ENCODE measurements at regions of chr19 and their contacts with region 1.

Region 1: DNA sequence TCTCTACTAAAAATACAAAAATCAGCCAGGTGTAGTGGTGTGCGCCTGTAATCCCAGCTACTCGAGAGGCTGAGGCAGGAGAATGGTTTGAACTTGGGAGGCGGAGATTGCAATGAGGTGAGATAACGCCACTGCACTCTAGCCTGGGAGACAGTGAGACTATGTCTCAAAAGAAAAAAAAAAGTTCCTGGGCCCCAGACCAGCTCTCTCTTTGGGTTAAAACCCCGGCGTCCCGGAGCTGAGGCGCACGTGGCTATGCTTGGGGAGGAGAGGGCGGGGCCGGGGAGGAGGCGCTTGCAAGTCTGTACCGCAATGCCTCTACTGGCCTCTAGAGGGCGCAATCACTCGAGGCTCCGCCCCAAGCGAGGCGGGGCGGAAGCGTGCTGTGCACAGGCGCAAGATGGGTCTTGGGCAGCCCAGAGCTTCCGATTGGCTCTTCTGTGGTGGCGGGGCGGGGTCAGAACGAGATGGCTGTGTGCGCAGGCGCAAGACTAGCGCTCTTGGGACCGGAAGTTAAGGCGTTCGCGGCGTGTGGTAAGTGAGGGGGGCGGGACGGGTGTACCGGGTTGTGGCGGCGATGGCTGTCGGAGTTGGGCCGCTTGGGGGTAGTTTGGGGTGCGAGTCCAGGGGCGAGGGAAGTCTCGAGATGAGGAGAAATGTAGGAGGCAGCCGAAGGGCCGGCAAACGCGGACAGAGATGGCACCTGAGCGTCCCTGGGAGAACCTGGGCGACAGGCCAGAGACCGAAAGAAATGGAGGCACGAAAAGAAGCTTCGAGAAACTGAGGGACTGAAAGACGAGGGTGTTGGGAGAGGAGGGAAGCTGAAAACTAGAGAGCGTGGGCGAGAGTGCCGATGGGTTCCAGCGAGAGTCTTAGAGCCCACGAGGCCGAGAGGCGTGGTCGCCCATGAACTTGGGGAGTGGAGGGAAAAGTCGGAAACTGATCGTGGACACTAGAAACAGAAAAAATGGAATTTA is at the start of gene DHX34:
- DNase-seq: peak; percentile 99
- H3K4me3 ChIP-seq: peak within 1 kb of the TSS; percentile 86
- H3K4me3 Mint-ChIP-seq: peak within 1 kb of the TSS; percentile 95
- H3K27ac Mint-ChIP-seq: peak within 1 kb of the TSS; percentile 88
- H3K4me1 ChIP-seq: no peaks in the 10 kb centered on the region
- H3K4me1 Mint-ChIP-seq: peaks cover 27% of the 10 kb centered on the region
- H3K27me3 ChIP-seq: no peaks in the 10 kb centered on the region
- H3K27me3 Mint-ChIP-seq: no peaks in the 10 kb centered on the region
- CTCF ChIP-seq: peak; percentile 97 to 98
- total RNA-seq, gene DHX34: 28.7 TPM in 2 replicates

Region 2: DNA sequence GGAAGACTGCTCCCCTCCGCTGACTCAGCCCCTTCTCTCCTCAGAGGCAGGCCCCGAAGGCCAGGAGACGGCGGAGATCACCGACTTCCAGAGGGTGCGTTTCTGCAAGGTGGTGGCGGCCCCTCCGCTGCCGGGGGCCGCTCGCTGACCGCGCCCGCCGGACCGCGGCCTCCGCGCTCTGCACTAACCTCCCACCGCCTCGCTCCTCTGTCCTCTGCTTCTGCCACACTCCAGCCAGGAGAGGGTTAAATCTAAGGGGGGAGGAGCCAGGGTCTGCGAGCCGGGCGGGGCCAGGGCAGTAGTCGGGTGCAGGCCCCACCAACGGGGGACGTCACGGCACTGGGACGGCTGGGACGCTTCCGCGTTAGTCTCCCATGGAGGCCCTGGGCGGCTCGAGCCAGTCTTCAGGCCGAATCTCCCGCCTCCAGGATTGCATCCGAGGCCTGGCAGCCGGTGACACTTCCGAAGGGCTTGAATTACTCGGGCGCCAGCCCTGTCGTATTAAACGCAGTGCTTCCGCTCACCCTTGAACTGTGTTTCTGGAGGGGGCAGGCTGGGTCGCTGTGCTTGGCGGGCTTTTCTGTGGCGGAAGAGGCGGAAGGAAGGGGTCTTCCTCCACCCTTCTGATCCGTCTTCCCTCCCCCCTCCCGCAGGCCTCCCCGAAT is 75.7 kb before region 1 on chr19:
- CTCF ChIA-PET with region 1: interaction called, 18 read pairs
- POLR2A ChIA-PET with region 1: interaction called, 33 read pairs
- intact Hi-C with region 1: no loop called
- DNase-seq: peak; percentile 98
- H3K4me3 ChIP-seq: peak overlapping the region; percentile 77
- H3K4me3 Mint-ChIP-seq: peak overlapping the region; percentile 93
- H3K27ac Mint-ChIP-seq: peak overlapping the region; percentile 94
- H3K4me1 ChIP-seq: peaks cover 9% of the 10 kb centered on the region; the same call in 1 of the 2 replicates
- H3K4me1 Mint-ChIP-seq: peaks cover 20% of the 10 kb centered on the region
- H3K27me3 ChIP-seq: no peaks in the 10 kb centered on the region
- H3K27me3 Mint-ChIP-seq: no peaks in the 10 kb centered on the region
- CTCF ChIP-seq: no peak

Region 3: DNA sequence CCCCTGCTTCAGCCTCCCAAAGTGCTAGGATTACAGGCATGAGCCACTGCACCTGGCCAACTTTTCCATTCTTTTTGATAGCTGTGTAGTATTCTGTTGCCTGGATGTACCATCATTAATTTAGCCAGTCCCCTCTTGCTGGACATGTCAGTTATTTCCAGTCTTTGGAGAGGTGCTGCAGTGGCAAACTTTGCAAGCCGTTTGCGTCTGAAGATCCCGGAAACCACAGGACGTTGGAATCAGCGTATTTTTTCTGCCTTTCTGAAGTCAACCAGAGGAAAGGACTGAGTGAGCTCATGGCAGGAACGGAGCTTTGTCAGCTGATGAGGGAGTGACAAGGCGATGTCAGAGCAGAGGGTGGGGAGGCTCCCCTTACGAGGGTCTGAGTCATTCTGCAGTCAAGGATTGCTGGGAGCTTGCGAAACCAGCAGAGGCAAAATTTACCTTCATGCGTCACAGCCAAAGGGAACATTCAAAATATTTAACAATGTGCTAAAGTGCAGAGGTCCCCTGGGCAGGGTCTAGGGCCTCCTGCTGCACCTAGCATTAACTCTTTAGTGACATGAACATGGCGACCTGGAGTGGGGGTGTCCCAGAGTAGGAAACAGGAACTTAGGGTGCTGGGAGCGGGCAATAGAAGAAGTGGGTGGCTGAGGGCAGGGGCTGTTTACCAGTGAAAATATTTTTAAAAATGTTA is 33.8 kb before region 1 on chr19:
- CTCF ChIA-PET with region 1: interaction called, 30 read pairs
- POLR2A ChIA-PET with region 1: interaction called, 9 read pairs
- intact Hi-C with region 1: loop called (anchors 1 kb)
- DNase-seq: peak; percentile 91
- H3K4me3 ChIP-seq: no peak overlapping the region
- H3K4me3 Mint-ChIP-seq: peak overlapping the region; percentile 54
- H3K27ac Mint-ChIP-seq: peak overlapping the region; percentile 92
- H3K4me1 ChIP-seq: peaks cover 10% of the 10 kb centered on the region; the same call in 1 of the 2 replicates
- H3K4me1 Mint-ChIP-seq: peaks cover 23% of the 10 kb centered on the region
- H3K27me3 ChIP-seq: no peaks in the 10 kb centered on the region
- H3K27me3 Mint-ChIP-seq: no peaks in the 10 kb centered on the region
- CTCF ChIP-seq: no peak

Region 4: DNA sequence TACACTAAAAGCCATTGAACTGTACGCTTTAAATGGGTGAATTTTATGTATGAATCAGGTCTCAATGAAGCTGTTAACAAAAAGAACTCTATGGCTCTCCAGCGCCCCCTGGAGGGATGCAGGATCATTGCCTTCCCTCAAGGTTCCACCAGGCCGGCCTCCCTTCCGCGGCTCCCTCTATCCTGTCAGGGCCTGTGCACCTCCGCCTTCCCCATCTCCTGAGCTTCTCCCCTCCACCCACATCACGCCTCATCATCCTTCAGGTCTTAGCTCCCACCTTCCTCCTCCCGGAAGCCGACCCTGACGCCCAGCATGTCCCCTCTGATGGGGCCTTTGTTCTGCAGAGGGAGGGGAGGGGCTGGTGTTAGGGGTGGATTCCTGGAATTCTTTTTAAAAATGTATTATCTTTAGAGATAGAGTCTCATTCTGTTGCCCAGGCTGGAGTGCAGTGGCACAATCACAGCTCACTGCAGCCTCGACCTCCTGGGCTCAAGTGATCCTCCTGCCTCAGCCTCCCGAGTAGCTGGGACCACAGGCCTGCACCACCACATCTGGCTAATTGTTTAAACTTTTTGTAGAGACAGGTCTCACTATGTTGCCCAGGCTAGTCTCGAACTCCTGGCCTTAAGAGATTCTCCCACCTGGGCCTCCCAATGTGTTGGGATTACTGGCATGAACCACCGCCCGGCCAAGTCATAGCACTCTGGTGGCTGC is 42.6 kb after region 1 on chr19:
- CTCF ChIA-PET with region 1: interaction called, 21 read pairs
- POLR2A ChIA-PET with region 1: interaction called, 5 read pairs
- intact Hi-C with region 1: no loop called
- DNase-seq: peak; percentile 71 to 84
- H3K4me3 ChIP-seq: no peak overlapping the region
- H3K4me3 Mint-ChIP-seq: peak overlapping the region; percentile 34
- H3K27ac Mint-ChIP-seq: no peak overlapping the region
- H3K4me1 ChIP-seq: no peaks in the 10 kb centered on the region
- H3K4me1 Mint-ChIP-seq: no peaks in the 10 kb centered on the region
- H3K27me3 ChIP-seq: no peaks in the 10 kb centered on the region
- H3K27me3 Mint-ChIP-seq: peaks cover 6% of the 10 kb centered on the region
- CTCF ChIP-seq: peak; percentile 89 to 92